Transverse colon (tissue), 4 donors: ENCODE measurements at regions of chr11 and their contacts with region 1.

Region 1: GRCh38 chr11:63681321-63682049 is at the start of gene RTN3:
- DNase-seq: peak; percentile 99
- H3K4me3 ChIP-seq: peak within 1 kb of the TSS; percentile 79 to 95 (median 90)
- H3K27ac ChIP-seq: peak within 1 kb of the TSS; percentile 96 to 99 (median 98)
- H3K4me1 ChIP-seq: peaks cover 7 to 26% (median 12%) of the 10 kb centered on the region in 4 donors
- H3K27me3 ChIP-seq: no peaks in the 10 kb centered on the region
- CTCF ChIP-seq: peak in 1 of 5 experiments; percentile 20
- EP300 ChIP-seq: no peak
- POLR2A ChIP-seq: peak; percentile 98
- total RNA-seq, gene RTN3: 44.8 to 187 (median 117) TPM

Region 2: GRCh38 chr11:63698976-63699733 is 17.7 kb after region 1 on chr11:
- in situ Hi-C with region 1: no loop called
- intact Hi-C with region 1: loop called (anchors 1 kb)
- DNase-seq: peak; percentile 18
- H3K4me3 ChIP-seq: no peak overlapping the region
- H3K27ac ChIP-seq: peak overlapping the region; percentile 24 to 63 (median 60)
- H3K4me1 ChIP-seq: peaks cover 14 to 24% (median 17%) of the 10 kb centered on the region in 4 donors
- H3K27me3 ChIP-seq: no peaks in the 10 kb centered on the region
- CTCF ChIP-seq: no peak
- EP300 ChIP-seq: no peak
- POLR2A ChIP-seq: no peak